Heart left ventricle (tissue), 16 donors: ENCODE measurements at regions of chr7 and their contacts with region 1.

Region 1: GRCh38 chr7:54242776-54243175 is 299.4 kb upstream of the VSTM2A start:
- DNase-seq: no peak
- ATAC-seq: no peak
- H3K4me3 ChIP-seq: no peak overlapping the region
- H3K27ac ChIP-seq: no peak overlapping the region
- H3K4me1 ChIP-seq: no peaks in the 10 kb centered on the region
- H3K27me3 ChIP-seq: no peaks in the 10 kb centered on the region
- CTCF ChIP-seq: no peak
- POLR2A ChIP-seq: no peak

Region 2: GRCh38 chr7:54326592-54327167 is 83.9 kb after region 1 on chr7:
- intact Hi-C with region 1: loop called in 2 of 10 experiments (anchors 10 kb)
- DNase-seq: no peak
- ATAC-seq: no peak
- H3K4me3 ChIP-seq: no peak overlapping the region
- H3K27ac ChIP-seq: no peak overlapping the region
- H3K4me1 ChIP-seq: no peaks in the 10 kb centered on the region
- H3K27me3 ChIP-seq: no peaks in the 10 kb centered on the region
- CTCF ChIP-seq: no peak
- POLR2A ChIP-seq: no peak

Region 3: GRCh38 chr7:54339073-54339472 is 96.3 kb after region 1 on chr7:
- intact Hi-C with region 1: loop called in 3 of 10 experiments (anchors 10 kb)
- DNase-seq: peak in 4 of 5 donors; percentile 13 to 58 (median 41)
- ATAC-seq: peak in 3 of 4 donors; percentile 76 to 96 (median 81)
- H3K4me3 ChIP-seq: no peak overlapping the region
- H3K27ac ChIP-seq: no peak overlapping the region
- H3K4me1 ChIP-seq: peaks cover 0 to 2% (median 0%) of the 10 kb centered on the region in 12 donors
- H3K27me3 ChIP-seq: no peaks in the 10 kb centered on the region
- CTCF ChIP-seq: no peak
- POLR2A ChIP-seq: no peak

Region 4: DNA sequence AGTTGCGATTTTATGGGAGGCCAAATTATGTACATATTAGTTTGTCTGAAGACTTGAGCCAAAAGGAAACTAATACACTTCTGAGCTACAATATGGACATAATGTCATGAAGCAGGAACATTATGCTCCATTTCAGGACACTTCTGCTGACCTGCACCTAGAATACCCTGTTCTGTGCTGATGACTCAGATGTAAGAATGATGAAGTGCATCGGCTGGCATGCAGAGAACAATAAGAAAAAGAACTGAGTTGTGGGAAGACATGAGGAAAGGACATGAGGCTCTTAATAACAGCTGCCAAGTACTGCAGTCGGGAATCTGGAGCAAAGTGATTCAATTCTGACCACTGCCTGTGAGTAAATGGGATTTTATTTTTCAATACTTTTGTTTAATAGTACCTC is 106.5 kb after region 1 on chr7:
- intact Hi-C with region 1: loop called in 2 of 10 experiments (anchors 10 kb)
- DNase-seq: no peak
- ATAC-seq: no peak
- H3K4me3 ChIP-seq: no peak overlapping the region
- H3K27ac ChIP-seq: no peak overlapping the region
- H3K4me1 ChIP-seq: no peaks in the 10 kb centered on the region
- H3K27me3 ChIP-seq: no peaks in the 10 kb centered on the region
- CTCF ChIP-seq: no peak
- POLR2A ChIP-seq: no peak

Region 5: DNA sequence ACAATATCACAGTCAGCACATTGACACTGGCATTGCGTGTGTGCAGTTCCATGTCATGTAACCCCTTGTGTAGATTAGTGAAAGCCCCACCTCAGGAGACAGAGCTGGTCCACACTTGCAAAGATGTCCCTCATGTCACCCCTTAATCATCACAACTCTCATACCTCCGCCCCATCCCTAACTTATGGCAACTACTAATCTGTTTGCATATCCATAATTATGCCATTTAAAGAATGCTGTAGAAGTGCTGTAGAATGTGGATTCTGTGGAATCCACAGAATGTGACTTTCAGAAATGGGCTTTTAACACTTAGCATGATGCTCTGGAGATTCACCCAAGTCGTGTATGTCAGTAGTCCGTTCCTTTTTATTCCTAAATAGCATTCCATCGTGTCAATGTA is 196.6 kb after region 1 on chr7:
- intact Hi-C with region 1: no loop called
- DNase-seq: no peak
- ATAC-seq: no peak
- H3K4me3 ChIP-seq: no peak overlapping the region
- H3K27ac ChIP-seq: no peak overlapping the region
- H3K4me1 ChIP-seq: no peaks in the 10 kb centered on the region
- H3K27me3 ChIP-seq: no peaks in the 10 kb centered on the region
- CTCF ChIP-seq: no peak
- POLR2A ChIP-seq: no peak

Region 6: GRCh38 chr7:55053651-55054571 is 811.1 kb after region 1 on chr7:
- intact Hi-C with region 1: no loop called
- DNase-seq: no peak
- ATAC-seq: peak in 3 of 4 donors; percentile 22 to 28 (median 24)
- H3K4me3 ChIP-seq: no peak overlapping the region
- H3K27ac ChIP-seq: peak overlapping the region in 8 of 12 donors; percentile 10 to 81 (median 14)
- H3K4me1 ChIP-seq: peaks cover 0 to 54% (median 14%) of the 10 kb centered on the region in 12 donors
- H3K27me3 ChIP-seq: no peaks in the 10 kb centered on the region
- CTCF ChIP-seq: peak in 2 of 12 donors; percentile 7 to 25
- POLR2A ChIP-seq: no peak